Gastrocnemius medialis (tissue), 4 donors: ENCODE measurements at regions of chr4 and their contacts with region 1.

Region 1: GRCh38 chr4:48844843-48845242 is 14.0 kb downstream of the OCIAD1 start:
- DNase-seq: no peak
- ATAC-seq: no peak
- H3K4me3 ChIP-seq: no peak overlapping the region
- H3K27ac ChIP-seq: no peak overlapping the region
- H3K4me1 ChIP-seq: peaks cover 0 to 9% of the 10 kb centered on the region in 2 donors
- H3K27me3 ChIP-seq: no peaks in the 10 kb centered on the region
- CTCF ChIP-seq: no peak
- POLR2A ChIP-seq: no peak

Region 2: GRCh38 chr4:48588230-48589097 is 256.4 kb before region 1 on chr4:
- in situ Hi-C with region 1: no loop called
- intact Hi-C with region 1: no loop called
- DNase-seq: no peak
- ATAC-seq: no peak
- H3K4me3 ChIP-seq: no peak overlapping the region
- H3K27ac ChIP-seq: no peak overlapping the region
- H3K4me1 ChIP-seq: peaks cover 4 to 6% of the 10 kb centered on the region in 2 donors
- H3K27me3 ChIP-seq: no peaks in the 10 kb centered on the region
- CTCF ChIP-seq: no peak
- POLR2A ChIP-seq: no peak

Region 3: GRCh38 chr4:48906206-48907173 is 61.6 kb after region 1 on chr4 and contains the start of gene OCIAD2:
- in situ Hi-C with region 1: loop called in 1 of 4 experiments (anchors 10 kb)
- intact Hi-C with region 1: no loop called
- DNase-seq: peak in 1 of 2 donors; percentile 5
- ATAC-seq: peak in 1 of 2 donors; percentile 41
- H3K4me3 ChIP-seq: peak within 1 kb of the TSS; percentile 50 to 64 (median 58)
- H3K27ac ChIP-seq: peak within 1 kb of the TSS in 2 of 4 donors; percentile 28
- H3K4me1 ChIP-seq: peaks cover 0 to 6% of the 10 kb centered on the region in 2 donors
- H3K27me3 ChIP-seq: peaks cover 0 to 18% (median 5%) of the 10 kb centered on the region in 3 donors
- CTCF ChIP-seq: peak in 1 of 5 experiments; percentile 7
- POLR2A ChIP-seq: no peak
- total RNA-seq, gene OCIAD2: 1.3 to 7.7 (median 2.4) TPM